ENCODE measurements at regions of chr17 and their contacts with region 1.

Region 1: DNA sequence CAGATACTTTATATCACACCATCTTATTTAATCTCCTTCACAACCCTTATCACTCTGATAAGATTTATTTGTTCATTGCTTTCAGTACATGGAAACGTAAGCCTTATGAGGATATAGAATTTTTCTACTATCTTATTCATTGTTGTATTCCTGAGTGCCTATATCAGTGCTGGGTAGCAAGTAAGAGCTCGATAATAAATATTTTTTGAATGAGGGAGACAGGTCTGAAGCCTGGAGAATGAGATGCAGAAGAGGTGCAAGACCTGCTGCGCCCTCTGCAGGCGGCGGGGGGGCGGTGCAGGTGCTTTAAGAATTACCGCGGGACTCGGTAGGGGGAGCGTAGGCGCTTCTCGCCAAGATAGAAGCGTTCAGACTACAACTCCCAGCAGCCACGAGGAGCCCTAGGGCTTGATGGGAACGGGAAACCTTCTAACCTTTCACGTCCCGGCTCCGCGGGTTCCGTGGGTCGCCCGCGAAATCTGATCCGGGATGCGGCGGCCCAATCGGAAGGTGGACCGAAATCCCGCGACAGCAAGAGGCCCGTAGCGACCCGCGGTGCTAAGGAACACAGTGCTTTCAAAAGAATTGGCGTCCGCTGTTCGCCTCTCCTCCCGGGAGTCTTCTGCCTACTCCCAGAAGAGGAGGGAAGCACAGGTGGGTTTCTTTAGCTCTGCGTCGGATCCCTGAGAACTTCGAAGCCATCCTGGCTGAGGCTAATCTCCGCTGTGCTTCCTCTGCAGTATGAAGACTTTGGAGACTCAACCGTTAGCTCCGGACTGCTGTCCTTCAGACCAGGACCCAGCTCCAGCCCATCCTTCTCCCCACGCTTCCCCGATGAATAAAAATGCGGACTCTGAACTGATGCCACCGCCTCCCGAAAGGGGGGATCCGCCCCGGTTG is at the start of gene WRAP53:
- DNase-seq: peak; percentile 96
- CTCF ChIP-seq: peak; percentile 99

Region 2: GRCh38 chr17:7214300-7215135 is 473.6 kb before region 1 on chr17:
- CTCF ChIA-PET with region 1: no interaction called
- POLR2A ChIA-PET with region 1: no interaction called
- DNase-seq: peak; percentile 97
- CTCF ChIP-seq: peak; percentile 32

Region 3: GRCh38 chr17:7583253-7584109 is 104.7 kb before region 1 on chr17 and contains the start of gene MPDU1:
- CTCF ChIA-PET with region 1: interaction called, 4 read pairs
- POLR2A ChIA-PET with region 1: interaction called, 13 read pairs
- DNase-seq: peak; percentile 90
- CTCF ChIP-seq: no peak

Region 4: GRCh38 chr17:7627250-7628121 is 60.7 kb before region 1 on chr17 and contains the start of gene SAT2:
- CTCF ChIA-PET with region 1: interaction called, 112 read pairs
- POLR2A ChIA-PET with region 1: interaction called, 9 read pairs
- DNase-seq: peak; percentile 99
- CTCF ChIP-seq: no peak

Region 5: GRCh38 chr17:7650509-7651096 is 37.6 kb before region 1 on chr17 and contains the start of gene ATP1B2:
- CTCF ChIA-PET with region 1: interaction called, 25 read pairs
- POLR2A ChIA-PET with region 1: interaction called, 18 read pairs
- DNase-seq: peak; percentile 83
- CTCF ChIP-seq: no peak

Region 6: DNA sequence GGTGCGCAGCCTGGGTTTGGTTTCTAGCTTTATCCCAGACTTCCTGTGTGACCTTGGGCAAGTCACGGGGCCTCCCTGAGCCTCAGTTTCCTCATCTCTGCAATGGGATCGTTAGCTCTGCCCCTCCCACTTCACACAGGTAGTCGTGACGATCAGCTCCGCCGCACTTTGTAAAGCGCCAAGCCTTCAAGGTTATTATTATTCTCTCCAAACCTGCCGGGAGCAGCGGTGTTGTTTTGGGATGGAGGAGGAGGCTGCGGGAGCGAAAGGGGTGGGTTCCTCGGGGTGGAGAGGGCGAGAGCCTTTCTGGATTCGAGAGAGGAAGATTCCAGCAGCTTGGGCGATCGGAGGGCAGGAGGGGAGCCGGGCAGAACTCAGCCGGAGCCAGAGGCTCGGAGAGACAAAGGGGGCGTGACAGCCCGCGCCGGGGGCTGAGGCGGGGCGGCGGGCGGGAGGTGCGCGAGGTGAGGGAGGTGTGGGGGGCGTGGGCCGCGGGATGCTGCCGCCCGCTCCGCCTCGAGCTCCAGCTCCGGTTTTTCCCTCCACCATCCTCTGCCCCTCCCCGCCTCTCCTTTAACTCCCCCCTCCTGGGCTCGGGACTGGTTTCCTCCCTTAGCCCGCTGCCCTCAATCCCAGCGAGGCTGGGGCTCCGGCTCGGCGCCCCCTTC is 16.6 kb after region 1 on chr17 and contains the start of gene EFNB3:
- CTCF ChIA-PET with region 1: interaction called, 20 read pairs
- POLR2A ChIA-PET with region 1: no interaction called
- DNase-seq: no peak
- CTCF ChIP-seq: no peak